Right cardiac atrium (tissue), 5 donors: ENCODE measurements at regions of chr16 and their contacts with region 1.

Region 1: DNA sequence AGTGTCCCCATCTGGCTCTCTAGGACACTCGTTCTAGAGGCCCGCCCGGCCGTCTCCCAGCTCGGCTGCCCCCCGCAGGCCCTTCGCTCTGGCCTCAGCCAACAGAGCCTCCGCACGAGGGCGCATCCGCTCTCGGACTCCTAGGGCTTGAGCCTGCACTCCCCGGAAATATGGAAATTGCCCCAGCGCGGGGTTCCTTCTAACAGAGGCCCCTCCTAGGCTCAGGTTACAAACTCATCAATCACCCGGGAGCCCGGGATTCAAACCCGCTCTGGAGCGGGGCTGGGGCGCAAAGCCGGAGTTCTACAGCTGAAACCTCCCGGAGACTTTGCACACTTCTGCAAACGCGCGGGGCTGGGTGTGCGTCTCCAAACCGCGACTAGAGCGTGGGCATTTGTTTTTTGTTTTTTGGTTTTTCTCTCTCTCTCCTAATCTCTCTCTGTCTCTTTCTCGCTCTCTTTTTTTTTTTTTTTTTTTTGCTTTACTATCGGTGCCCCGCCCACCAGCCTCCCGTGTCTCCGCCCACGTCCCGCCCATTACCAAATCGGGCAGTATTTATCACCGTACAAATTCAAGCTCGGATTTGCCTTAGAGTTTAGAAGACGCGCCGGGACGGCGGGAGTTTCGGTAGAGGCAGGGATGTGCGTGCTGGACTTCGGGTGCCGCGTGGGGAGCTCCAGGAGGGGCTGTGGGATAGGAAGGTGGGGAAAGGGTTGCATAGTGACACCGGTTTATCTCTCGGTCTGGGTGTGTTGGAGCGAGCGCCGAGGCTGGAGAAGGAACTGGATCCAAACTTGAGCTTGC is 2.4 kb upstream of the FOXL1 start:
- DNase-seq: peak; percentile 84 to 95 (median 93)
- ATAC-seq: peak; percentile 79 to 83
- H3K4me3 ChIP-seq: peak overlapping the region; percentile 49
- H3K27ac ChIP-seq: peak overlapping the region; percentile 31
- H3K4me1 ChIP-seq: no peaks in the 10 kb centered on the region
- H3K27me3 ChIP-seq: no peaks in the 10 kb centered on the region

Region 2: DNA sequence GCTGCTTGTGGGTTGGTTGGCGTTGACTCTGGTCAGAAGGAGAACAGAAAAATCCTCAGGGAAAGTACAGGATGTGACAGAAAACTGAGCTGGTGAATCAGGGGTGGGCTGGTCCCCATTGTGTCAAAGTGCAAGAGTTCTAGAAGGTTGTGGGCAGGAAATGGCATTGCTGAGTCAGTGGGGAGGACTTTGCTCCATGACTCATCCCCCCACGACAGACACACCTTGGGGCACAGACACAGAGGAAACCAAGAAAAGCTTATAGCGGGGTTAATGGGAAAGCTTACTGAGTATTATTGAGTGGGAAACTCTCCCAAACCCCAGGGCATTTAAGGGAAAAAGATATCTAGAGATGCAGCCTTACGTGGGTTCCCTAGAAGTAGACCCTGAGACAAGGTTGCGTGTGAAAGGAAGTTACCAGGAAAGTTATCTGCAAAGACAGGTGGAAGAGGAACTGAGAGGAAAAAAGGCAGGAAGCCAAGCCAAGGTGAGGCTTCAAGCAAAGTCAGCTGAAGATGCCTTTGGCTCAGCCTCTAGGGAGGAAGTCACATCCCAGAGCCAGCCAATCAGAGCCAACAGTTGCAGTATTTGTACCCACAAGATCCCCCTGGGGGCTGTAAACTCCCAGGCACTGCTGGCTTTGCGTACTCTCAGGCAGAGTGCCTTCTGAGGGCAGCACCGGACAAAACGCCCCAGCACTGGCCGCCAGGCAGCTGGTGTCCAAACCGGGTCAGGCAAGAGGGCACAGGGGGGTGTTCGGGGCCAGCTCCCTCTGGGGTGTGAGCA is 88.8 kb after region 1 on chr16:
- intact Hi-C with region 1: loop called in 2 of 4 experiments (anchors 10 kb)
- DNase-seq: no peak
- ATAC-seq: peak; percentile 28 to 88
- H3K4me3 ChIP-seq: no peak overlapping the region
- H3K27ac ChIP-seq: peak overlapping the region; percentile 48
- H3K4me1 ChIP-seq: peaks cover 3% of the 10 kb centered on the region
- H3K27me3 ChIP-seq: no peaks in the 10 kb centered on the region

Region 3: GRCh38 chr16:86669937-86670749 is 94.2 kb after region 1 on chr16:
- intact Hi-C with region 1: loop called in 3 of 4 experiments (anchors 5 to 10 kb)
- DNase-seq: peak in 2 of 3 donors; percentile 81 to 86
- ATAC-seq: peak; percentile 22 to 55
- H3K4me3 ChIP-seq: no peak overlapping the region
- H3K27ac ChIP-seq: peak overlapping the region; percentile 28
- H3K4me1 ChIP-seq: peaks cover 3% of the 10 kb centered on the region
- H3K27me3 ChIP-seq: no peaks in the 10 kb centered on the region

Region 4: GRCh38 chr16:86751076-86752030 is 175.4 kb after region 1 on chr16:
- intact Hi-C with region 1: loop called in 2 of 4 experiments (anchors 10 kb)
- DNase-seq: no peak
- ATAC-seq: no peak
- H3K4me3 ChIP-seq: no peak overlapping the region
- H3K27ac ChIP-seq: peak overlapping the region; percentile 10
- H3K4me1 ChIP-seq: no peaks in the 10 kb centered on the region
- H3K27me3 ChIP-seq: no peaks in the 10 kb centered on the region

Region 5: GRCh38 chr16:86761111-86762031 is 185.4 kb after region 1 on chr16:
- intact Hi-C with region 1: loop called in 3 of 4 experiments (anchors 10 kb)
- DNase-seq: peak; percentile 70 to 86 (median 86)
- ATAC-seq: peak; percentile 79 to 81
- H3K4me3 ChIP-seq: no peak overlapping the region
- H3K27ac ChIP-seq: no peak overlapping the region
- H3K4me1 ChIP-seq: no peaks in the 10 kb centered on the region
- H3K27me3 ChIP-seq: no peaks in the 10 kb centered on the region